B cell (primary cell): ENCODE measurements at regions of chr1 and their contacts with region 1.

Region 1: GRCh38 chr1:51897699-51898031 is 19.1 kb upstream of the NRDC start:
- DNase-seq: no peak
- ATAC-seq: no peak
- H3K4me3 ChIP-seq: no peak overlapping the region
- H3K4me3 Mint-ChIP-seq: no peak overlapping the region
- H3K27ac ChIP-seq: no peak overlapping the region
- H3K27ac Mint-ChIP-seq: no peak overlapping the region
- H3K4me1 ChIP-seq: no peaks in the 10 kb centered on the region
- H3K4me1 Mint-ChIP-seq: peaks cover 2% of the 10 kb centered on the region
- H3K27me3 ChIP-seq: peaks cover 0 to 14% (median 4%) of the 10 kb centered on the region in 4 experiments
- H3K27me3 Mint-ChIP-seq: peaks cover 57% of the 10 kb centered on the region
- CTCF ChIP-seq: no peak

Region 2: DNA sequence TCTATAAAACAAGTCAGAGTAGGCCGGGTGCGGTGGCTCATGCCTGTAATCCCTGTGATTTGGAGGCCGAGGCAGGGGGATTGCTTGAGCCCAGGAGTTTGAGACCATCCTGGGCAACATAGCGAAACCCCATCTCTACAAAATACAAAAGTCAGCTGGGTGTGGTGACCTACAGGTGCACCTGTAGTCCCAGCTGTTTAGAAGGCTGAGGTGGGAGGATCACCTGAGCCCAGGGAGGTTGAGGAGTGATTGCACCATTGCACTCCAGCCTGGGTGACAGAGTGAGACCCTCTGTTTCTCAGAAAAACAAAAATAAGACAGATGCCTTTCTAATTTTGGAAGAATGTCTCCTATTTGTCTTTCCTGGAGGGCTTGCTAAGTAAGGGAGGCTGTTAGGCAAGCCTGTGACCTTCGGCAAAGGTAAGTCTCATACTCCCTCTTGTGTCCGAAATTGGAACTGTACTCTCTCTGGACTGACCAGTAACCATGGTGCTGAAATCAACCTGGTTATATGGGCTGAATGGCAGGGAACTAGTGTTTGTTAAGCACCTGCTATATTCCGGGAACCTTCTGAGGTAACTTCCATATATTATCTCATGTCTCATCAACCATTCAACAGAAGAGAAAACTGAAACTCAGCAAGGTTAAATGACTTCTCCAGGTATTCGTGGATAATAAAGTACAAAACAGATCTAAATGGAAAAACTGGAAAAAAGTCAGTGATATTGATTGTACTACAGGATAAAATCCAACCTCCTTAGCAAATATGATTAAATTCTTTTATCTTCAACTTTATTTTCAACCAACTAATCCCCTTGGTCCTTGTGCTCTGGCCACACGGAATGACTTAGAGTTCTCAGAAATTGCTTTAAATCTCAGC is 104.6 kb after region 1 on chr1:
- CTCF ChIA-PET with region 1: interaction called, 47 read pairs
- POLR2A ChIA-PET with region 1: no interaction called
- intact Hi-C with region 1: no loop called
- DNase-seq: peak; percentile 82
- ATAC-seq: peak; percentile 97
- H3K4me3 ChIP-seq: no peak overlapping the region
- H3K4me3 Mint-ChIP-seq: no peak overlapping the region
- H3K27ac ChIP-seq: no peak overlapping the region
- H3K27ac Mint-ChIP-seq: no peak overlapping the region
- H3K4me1 ChIP-seq: no peaks in the 10 kb centered on the region
- H3K4me1 Mint-ChIP-seq: no peaks in the 10 kb centered on the region
- H3K27me3 ChIP-seq: peaks cover 0 to 7% (median 0%) of the 10 kb centered on the region in 4 experiments
- H3K27me3 Mint-ChIP-seq: peaks cover 30% of the 10 kb centered on the region
- CTCF ChIP-seq: peak; percentile 94